MCF 10A (cell line): ENCODE measurements at regions of chr5 and their contacts with region 1.

Region 1: DNA sequence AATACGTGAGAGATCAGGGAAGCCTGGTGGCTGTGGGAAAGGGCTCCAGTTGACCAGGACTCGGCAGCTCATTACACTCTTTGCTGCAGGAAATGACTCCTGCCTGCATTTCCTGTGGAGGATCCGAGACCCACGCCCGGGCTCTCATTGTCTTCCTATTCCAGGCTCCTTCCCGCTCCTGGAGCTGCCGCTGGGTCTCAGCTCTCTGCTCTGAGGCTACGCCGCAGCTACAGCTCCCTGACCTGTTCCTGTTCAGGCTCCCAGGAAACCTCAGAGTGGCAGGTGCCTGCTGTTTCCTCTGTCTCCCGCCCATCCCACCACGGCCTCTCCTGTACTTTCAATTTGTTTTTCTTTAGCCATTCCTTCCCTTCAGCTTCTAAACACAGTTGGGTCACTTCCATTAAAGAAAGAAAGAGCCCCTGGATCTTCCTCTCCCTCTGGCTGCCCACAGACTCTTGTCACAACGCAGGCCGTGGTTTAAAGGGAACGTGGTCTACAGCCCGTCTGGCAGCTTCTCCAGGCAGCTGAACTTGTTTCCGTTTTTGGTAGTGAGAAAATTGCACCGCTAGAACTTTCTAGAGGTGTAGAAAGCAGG is 71.5 kb downstream of the IL6ST start:
- DNase-seq: no peak
- H3K4me3 Mint-ChIP-seq: no peak overlapping the region
- H3K27ac Mint-ChIP-seq: no peak overlapping the region
- H3K4me1 Mint-ChIP-seq: no peaks in the 10 kb centered on the region
- H3K27me3 Mint-ChIP-seq: no peaks in the 10 kb centered on the region
- CTCF ChIP-seq: no peak

Region 2: GRCh38 chr5:55407059-55407684 is 516.1 kb before region 1 on chr5:
- CTCF ChIA-PET with region 1: interaction called, 3 read pairs
- POLR2A ChIA-PET with region 1: no interaction called
- intact Hi-C with region 1: loop called (anchors 2 kb)
- DNase-seq: peak; percentile 54
- H3K4me3 Mint-ChIP-seq: no peak overlapping the region
- H3K27ac Mint-ChIP-seq: peak overlapping the region; percentile 53
- H3K4me1 Mint-ChIP-seq: no peaks in the 10 kb centered on the region
- H3K27me3 Mint-ChIP-seq: no peaks in the 10 kb centered on the region
- CTCF ChIP-seq: peak; percentile 59

Region 3: DNA sequence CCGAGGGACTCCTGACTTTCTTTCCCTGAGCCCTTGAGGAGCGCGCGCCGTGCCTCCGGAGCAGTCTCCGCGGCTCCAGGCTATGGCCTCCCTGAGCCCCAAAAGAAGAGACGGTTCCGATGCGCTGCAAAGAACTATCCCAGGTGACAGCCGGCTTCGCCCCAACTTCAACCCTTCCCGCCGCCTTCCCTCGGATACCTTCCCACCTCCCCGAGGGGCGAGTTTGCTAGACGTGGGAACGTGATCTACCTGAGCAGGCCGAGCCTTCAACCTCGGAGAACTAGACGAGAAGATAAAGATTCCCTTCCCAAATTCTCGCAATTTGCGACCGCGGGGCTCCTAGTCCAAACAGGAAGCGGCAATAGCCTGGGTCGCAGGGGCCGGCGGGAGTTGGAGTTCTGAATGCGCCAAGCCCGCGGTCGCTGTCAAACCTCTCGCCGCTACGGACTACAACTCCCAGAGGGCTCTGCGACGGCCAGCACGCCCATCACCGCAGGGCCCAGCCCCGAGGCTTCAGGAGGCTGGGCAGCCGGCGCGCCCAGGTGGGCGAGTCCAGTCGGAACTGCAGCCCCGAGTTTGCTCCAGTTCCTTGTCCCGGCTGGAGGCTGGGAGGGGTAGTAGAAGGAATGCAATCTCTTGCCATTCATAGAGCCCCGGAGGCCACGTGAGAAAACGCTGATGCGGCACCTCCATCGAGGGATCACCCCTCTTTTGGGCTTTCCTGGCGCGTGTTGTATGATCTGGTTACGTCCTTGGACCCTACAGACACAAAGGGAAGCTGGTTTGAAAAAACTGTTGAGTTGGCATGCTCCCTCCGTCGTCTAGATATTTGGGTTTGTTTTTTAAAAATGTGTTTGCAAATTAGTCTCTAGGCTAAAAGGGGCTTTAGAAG is 211.1 kb before region 1 on chr5 and contains the start of gene SLC38A9:
- CTCF ChIA-PET with region 1: no interaction called
- POLR2A ChIA-PET with region 1: no interaction called
- intact Hi-C with region 1: loop called (anchors 2 kb)
- DNase-seq: peak; percentile 93
- H3K4me3 Mint-ChIP-seq: peak within 1 kb of the TSS; percentile 98
- H3K27ac Mint-ChIP-seq: peak within 1 kb of the TSS; percentile 99
- H3K4me1 Mint-ChIP-seq: peaks cover 5% of the 10 kb centered on the region
- H3K27me3 Mint-ChIP-seq: no peaks in the 10 kb centered on the region
- CTCF ChIP-seq: no peak
- total RNA-seq, gene SLC38A9: 20.1 and 25.6 TPM in 2 replicates

Region 4: DNA sequence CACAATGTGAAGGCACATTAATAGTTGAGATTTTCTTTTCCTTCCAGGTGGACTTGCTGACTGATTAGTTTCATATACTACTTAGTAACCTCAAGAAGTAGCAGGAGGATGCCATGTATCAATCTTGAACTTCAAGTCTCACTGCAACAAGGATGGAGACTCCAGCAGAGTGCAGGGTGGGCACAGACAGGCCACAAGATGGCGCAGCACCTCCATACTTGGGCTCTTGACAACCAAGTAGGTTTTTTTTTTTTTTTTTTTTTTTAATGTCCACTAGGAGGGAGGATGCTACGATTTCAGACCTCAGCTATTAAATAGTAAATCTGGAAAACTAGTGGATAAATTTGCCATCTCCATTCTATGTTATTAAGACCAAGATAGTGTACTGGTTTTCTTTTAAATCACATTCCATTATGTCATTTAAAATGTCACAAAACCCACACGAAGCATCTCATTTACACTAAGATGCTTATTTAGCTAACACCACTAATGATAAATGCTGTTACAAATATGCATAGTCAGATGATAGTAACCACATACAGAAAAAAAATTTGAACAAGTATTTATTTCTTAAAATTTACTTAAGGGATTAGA is 12.9 kb after region 1 on chr5:
- CTCF ChIA-PET with region 1: interaction called, 10 read pairs
- POLR2A ChIA-PET with region 1: interaction called, 3 read pairs
- intact Hi-C with region 1: no loop called
- DNase-seq: peak; percentile 76
- H3K4me3 Mint-ChIP-seq: no peak overlapping the region
- H3K27ac Mint-ChIP-seq: no peak overlapping the region
- H3K4me1 Mint-ChIP-seq: no peaks in the 10 kb centered on the region
- H3K27me3 Mint-ChIP-seq: no peaks in the 10 kb centered on the region
- CTCF ChIP-seq: peak; percentile 60

Region 5: DNA sequence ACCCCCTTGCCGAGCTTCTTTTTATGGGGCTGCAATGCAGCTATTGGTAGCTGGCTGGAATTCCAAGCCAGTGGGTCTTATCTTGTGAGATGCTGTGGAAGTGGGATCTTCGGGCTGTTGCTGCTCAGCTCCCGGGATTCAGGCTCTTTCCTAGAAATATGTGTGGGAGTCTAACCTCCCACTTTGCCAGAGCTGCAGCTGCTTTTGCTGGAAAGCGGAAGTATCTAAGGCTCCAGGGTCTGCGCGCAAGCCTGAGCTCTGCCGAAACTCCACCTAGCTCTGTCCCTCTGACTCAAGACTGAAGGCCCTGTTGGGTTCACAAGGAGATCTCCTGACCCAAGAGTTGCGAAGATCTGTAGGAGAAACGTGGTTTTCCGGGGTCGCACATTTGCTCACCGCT is 460.9 kb after region 1 on chr5:
- CTCF ChIA-PET with region 1: no interaction called
- POLR2A ChIA-PET with region 1: no interaction called
- intact Hi-C with region 1: no loop called
- DNase-seq: no peak
- H3K4me3 Mint-ChIP-seq: no peak overlapping the region
- H3K27ac Mint-ChIP-seq: no peak overlapping the region
- H3K4me1 Mint-ChIP-seq: peaks cover 5% of the 10 kb centered on the region
- H3K27me3 Mint-ChIP-seq: no peaks in the 10 kb centered on the region
- CTCF ChIP-seq: no peak

Region 6: GRCh38 chr5:57097526-57097925 is 1174.3 kb after region 1 on chr5:
- CTCF ChIA-PET with region 1: no interaction called
- POLR2A ChIA-PET with region 1: no interaction called
- intact Hi-C with region 1: no loop called
- DNase-seq: no peak
- H3K4me3 Mint-ChIP-seq: no peak overlapping the region
- H3K27ac Mint-ChIP-seq: no peak overlapping the region
- H3K4me1 Mint-ChIP-seq: no peaks in the 10 kb centered on the region
- H3K27me3 Mint-ChIP-seq: no peaks in the 10 kb centered on the region
- CTCF ChIP-seq: no peak